Caco-2 (cell line): ENCODE measurements at regions of chr16 and their contacts with region 1.

Region 1: DNA sequence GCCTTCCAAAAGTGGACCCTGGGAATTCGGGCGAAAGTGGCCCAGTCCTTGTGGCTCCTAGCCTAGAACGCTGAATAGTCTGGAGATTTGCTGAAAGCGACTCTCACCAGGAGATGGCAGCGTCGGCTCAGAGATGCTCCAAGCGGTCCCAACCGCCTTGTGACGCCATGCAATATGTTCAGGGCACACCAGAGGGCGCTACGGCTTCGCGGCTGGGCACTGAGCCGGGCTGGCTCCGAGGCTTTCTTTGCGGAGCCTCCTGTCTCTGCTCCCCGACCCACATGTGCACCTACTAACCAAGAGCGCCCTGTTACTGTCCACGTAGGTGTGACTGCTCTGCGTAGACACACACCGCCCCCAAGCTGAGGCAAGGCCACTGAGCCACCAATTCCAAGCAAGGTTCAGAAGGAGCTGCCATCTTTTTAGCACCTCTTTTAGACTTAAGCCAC is 36.9 kb downstream of the SYCE1L start:
- DNase-seq: peak; percentile 86 to 93
- H3K4me3 ChIP-seq: no peak overlapping the region
- H3K4me3 Mint-ChIP-seq: peak overlapping the region; percentile 55
- H3K27ac Mint-ChIP-seq: no peak overlapping the region
- H3K4me1 ChIP-seq: peaks cover 7% of the 10 kb centered on the region; the same call in 1 of the 2 replicates
- H3K4me1 Mint-ChIP-seq: peaks cover 28% of the 10 kb centered on the region
- H3K27me3 ChIP-seq: no peaks in the 10 kb centered on the region
- H3K27me3 Mint-ChIP-seq: peaks cover 2% of the 10 kb centered on the region
- CTCF ChIP-seq: peak; percentile 99 to 100

Region 2: GRCh38 chr16:77308163-77308561 is 72.1 kb after region 1 on chr16:
- CTCF ChIA-PET with region 1: no interaction called
- POLR2A ChIA-PET with region 1: no interaction called
- intact Hi-C with region 1: loop called (anchors 1 kb)
- DNase-seq: no peak
- H3K4me3 ChIP-seq: no peak overlapping the region
- H3K4me3 Mint-ChIP-seq: no peak overlapping the region
- H3K27ac Mint-ChIP-seq: no peak overlapping the region
- H3K4me1 ChIP-seq: peaks cover 41% of the 10 kb centered on the region
- H3K4me1 Mint-ChIP-seq: peaks cover 27% of the 10 kb centered on the region
- H3K27me3 ChIP-seq: no peaks in the 10 kb centered on the region
- H3K27me3 Mint-ChIP-seq: no peaks in the 10 kb centered on the region
- CTCF ChIP-seq: no peak

Region 3: GRCh38 chr16:77359065-77359502 is 123.0 kb after region 1 on chr16:
- CTCF ChIA-PET with region 1: no interaction called
- POLR2A ChIA-PET with region 1: no interaction called
- intact Hi-C with region 1: loop called (anchors 1 kb)
- DNase-seq: peak in 1 of 2 experiments; percentile 53
- H3K4me3 ChIP-seq: no peak overlapping the region
- H3K4me3 Mint-ChIP-seq: peak overlapping the region; percentile 19
- H3K27ac Mint-ChIP-seq: no peak overlapping the region
- H3K4me1 ChIP-seq: peaks cover 30% of the 10 kb centered on the region
- H3K4me1 Mint-ChIP-seq: peaks cover 24% of the 10 kb centered on the region
- H3K27me3 ChIP-seq: no peaks in the 10 kb centered on the region
- H3K27me3 Mint-ChIP-seq: no peaks in the 10 kb centered on the region
- CTCF ChIP-seq: no peak

Region 4: DNA sequence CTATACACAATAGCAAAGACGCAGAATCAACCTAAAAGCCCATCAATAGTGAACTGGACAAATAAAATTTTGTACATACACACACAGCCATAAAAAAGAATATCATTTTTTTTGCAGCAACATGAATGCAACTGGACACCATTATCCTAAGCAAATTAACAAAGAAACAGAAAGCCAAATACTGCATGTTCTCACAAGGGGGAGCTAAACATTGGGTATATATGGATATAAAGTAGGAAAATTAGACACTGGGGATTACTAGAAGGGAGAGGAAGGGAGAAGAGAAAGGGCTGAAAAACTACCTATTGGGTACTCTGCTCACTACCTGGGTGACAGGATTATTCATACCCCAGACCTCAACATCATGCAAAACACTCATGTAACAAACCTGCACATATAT is 170.6 kb after region 1 on chr16:
- CTCF ChIA-PET with region 1: no interaction called
- POLR2A ChIA-PET with region 1: no interaction called
- intact Hi-C with region 1: loop called (anchors 5 kb)
- DNase-seq: no peak
- H3K4me3 ChIP-seq: no peak overlapping the region
- H3K4me3 Mint-ChIP-seq: no peak overlapping the region
- H3K27ac Mint-ChIP-seq: no peak overlapping the region
- H3K4me1 ChIP-seq: peaks cover 4% of the 10 kb centered on the region; the same call in 1 of the 2 replicates
- H3K4me1 Mint-ChIP-seq: no peaks in the 10 kb centered on the region
- H3K27me3 ChIP-seq: no peaks in the 10 kb centered on the region
- H3K27me3 Mint-ChIP-seq: no peaks in the 10 kb centered on the region
- CTCF ChIP-seq: peak in 1 of 2 experiments; percentile 1

Region 5: DNA sequence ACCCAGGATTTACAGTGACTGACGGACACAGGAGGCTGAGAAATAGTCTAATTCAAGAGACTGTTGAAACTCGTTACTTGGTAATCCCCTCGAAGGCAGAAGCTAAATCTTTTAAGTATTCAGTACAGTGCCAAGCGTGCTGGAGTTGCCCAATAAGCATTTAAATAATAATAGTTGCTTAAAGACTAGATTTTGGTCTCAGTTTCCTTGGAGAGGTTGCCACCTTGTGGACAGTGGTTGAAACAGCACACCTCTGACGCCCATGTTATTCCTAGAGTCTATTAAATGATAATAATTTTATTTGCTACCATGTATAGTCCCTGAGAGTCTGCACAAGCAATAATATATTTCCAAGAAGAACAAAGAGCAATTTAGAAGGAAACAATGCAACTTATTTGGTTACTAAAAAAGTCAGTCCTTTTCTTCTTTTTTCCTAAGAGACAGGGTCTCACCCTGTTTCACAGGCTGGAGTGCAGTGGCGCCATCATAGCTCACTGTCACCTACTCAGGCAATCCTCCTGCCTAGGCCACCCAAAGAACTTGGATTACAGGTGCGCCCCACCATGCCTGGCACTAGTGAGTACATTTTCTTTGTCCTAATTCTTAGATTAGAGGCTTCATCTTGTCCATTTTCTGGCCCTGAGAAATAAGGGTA is 348.2 kb after region 1 on chr16:
- CTCF ChIA-PET with region 1: interaction called, 47 read pairs
- POLR2A ChIA-PET with region 1: no interaction called
- intact Hi-C with region 1: loop called (anchors 1 kb)
- DNase-seq: peak; percentile 46 to 52
- H3K4me3 ChIP-seq: no peak overlapping the region
- H3K4me3 Mint-ChIP-seq: no peak overlapping the region
- H3K27ac Mint-ChIP-seq: no peak overlapping the region
- H3K4me1 ChIP-seq: no peaks in the 10 kb centered on the region
- H3K4me1 Mint-ChIP-seq: no peaks in the 10 kb centered on the region
- H3K27me3 ChIP-seq: no peaks in the 10 kb centered on the region
- H3K27me3 Mint-ChIP-seq: peaks cover 2% of the 10 kb centered on the region
- CTCF ChIP-seq: peak; percentile 87 to 91